AG04450 (cell line): ENCODE measurements at regions of chr1 and their contacts with region 1.

Region 1: DNA sequence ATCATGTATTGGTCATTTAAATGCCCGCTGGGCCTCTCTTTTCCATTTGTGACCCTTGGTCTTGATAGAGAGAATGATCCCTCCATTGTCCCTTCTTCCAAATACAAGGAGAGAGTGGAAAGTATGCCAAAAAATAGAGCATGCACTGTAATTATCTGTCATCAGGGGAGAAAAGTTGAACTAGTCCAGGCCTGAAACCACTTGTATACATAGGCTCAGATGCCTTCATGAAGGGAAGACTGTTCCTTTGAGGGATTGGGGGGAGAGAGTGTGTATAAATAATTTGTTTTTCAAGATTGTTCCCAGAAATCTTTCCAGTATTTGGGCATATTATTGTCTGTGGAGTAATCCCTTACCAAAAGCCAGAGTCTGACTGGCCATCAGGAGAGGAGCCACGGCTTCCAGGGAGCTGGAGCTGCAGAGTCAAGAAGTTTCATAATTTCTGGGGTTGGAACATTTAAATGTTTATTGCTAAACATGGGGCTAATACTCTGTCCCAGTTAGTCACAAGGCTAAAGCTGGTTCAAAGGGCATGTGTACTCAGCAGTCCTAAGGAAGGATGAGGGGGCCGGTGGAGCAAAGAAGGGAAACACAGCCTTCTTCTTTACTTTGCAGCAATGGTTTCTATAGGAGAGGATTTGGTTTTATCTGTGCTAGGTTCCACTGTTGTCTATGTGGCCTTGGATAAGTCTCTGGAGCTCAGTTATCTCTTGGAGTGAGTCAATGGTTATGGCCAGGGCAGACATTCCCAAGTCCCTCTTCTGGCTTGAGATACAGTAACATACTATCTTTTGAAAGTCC is 9.6 kb downstream of the DENND2D start:
- DNase-seq: peak; percentile 29
- H3K4me3 ChIP-seq: no peak overlapping the region
- H3K27ac ChIP-seq: peak overlapping the region; percentile 87
- H3K27me3 ChIP-seq: no peaks in the 10 kb centered on the region
- CTCF ChIP-seq: no peak

Region 2: DNA sequence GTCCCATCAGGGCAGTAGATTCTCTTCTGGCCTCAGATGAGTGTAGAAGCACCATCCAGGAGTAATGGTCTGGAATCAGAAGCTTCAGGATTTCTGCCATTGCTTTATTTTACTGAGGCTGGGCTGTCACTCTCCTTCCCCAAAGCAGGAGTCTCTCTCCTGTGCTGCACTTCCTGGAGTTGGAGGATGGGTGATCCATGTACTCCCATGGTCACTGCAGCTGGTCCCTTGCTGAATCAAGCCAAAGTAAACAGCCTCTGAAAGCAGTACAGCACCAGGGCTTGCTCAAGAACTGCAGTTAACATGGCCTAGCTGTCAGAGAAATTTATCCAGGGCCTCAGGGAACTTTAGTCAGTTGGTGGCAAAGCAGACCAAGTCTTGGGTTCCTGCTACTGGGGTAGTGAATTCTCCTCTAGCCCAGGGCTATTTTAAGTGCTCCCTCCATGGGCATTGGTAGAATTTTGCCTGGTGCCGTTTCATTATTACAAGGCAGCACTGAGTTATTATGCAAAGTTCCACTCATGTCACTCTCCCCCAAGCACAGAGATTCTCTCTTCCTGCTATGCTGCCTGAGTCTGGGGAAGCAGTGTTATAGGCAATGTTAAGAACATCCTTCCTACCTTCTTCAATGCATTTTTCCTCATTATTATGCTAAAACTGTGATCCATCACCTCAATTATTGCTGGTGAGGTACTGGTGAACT is 80.5 kb before region 1 on chr1:
- CTCF ChIA-PET with region 1: no interaction called
- POLR2A ChIA-PET with region 1: no interaction called
- DNase-seq: no peak
- H3K4me3 ChIP-seq: no peak overlapping the region
- H3K27ac ChIP-seq: no peak overlapping the region
- H3K27me3 ChIP-seq: no peaks in the 10 kb centered on the region
- CTCF ChIP-seq: no peak

Region 3: DNA sequence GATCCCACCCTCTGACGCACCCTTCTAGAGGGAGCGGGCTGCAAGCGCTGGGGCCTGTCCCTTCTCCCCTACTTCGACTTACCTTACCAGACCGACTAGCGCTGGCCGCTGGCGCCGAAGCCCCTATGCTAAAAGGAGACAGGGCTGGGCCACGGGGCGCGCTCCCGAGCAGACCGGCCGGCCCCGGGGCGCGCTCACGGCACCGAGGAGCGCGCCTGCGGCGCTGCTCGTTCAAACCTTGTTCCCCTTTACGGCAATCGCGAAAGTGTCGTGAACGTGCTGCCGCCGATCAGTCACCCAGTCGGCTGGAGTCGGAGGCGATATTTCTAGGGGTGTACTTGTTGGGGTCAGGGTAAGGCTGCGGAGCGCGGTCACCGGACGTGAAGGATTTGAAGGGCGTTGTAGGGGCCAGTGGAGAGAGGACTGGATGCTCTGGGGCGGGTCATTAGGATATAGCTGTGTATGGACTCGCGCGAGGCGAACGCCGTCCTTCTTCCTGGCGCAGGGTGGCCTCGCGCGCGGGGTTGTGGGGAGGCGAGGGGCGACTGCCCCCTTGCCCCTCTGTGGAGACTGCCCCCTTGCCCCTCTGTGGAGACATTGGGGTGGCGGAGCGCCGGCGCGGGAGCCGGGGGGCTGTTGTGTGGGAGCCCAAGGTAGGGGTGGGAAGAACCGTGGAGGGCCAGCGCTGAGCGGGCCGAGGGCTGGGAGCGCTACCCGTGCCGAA is 50.7 kb before region 1 on chr1 and contains the starts of genes CEPT1 and DRAM2:
- CTCF ChIA-PET with region 1: no interaction called
- POLR2A ChIA-PET with region 1: interaction called, 11 read pairs
- DNase-seq: peak; percentile 83
- H3K4me3 ChIP-seq: peak within 1 kb of the TSS; percentile 85
- H3K27ac ChIP-seq: peak within 1 kb of the TSS; percentile 83
- H3K27me3 ChIP-seq: no peaks in the 10 kb centered on the region
- CTCF ChIP-seq: no peak
- polyA plus RNA-seq, gene CEPT1: 22.6 and 28.6 TPM in 2 replicates
- polyA plus RNA-seq, gene DRAM2: 73.7 and 86.5 TPM in 2 replicates

Region 4: DNA sequence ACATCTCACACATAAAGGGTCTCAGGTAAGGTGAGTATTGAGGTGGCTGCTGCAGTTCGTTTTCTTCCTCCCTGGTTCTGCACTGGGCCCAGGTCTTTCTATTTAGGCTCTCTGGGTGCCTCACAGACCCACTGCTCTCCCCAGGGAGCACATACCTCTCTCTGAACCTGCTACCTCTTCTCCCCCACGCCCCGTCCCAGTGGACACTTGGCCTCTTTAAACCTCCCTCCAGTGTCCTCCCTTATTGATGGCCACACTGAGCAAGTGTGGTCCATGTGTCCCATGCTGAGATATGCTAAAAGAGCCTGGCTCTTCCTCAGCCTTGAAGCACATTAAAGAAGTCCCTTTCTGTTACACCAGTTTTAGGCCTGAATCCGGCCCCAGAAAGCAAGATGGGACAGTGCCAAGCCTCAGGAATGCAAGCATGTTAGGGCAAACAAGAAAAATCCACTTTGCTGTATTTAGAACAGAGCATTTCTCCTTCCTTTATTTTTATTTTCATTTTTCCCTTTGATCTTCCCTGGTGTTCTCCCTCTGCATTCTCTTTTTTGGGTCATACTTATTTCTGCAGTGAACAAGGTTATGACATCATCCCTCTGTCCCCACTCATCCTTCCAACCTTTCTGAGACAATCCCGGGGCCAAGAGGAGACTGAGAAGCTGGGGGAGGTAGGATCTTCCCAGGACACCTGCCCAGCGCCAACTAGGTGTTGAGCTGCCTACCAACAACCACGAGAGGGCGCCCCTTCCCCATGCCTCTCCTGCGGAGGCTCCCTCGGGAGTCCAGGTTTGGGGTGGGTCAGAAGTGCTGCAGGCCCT is 31.7 kb after region 1 on chr1:
- CTCF ChIA-PET with region 1: interaction called, 10 read pairs
- POLR2A ChIA-PET with region 1: interaction called, 3 read pairs
- DNase-seq: no peak
- H3K4me3 ChIP-seq: no peak overlapping the region
- H3K27ac ChIP-seq: no peak overlapping the region
- H3K27me3 ChIP-seq: no peaks in the 10 kb centered on the region
- CTCF ChIP-seq: peak; percentile 97